ENCODE measurements at regions of chr4 and their contacts with region 1.

Region 1: GRCh38 chr4:183522821-183523220 is 18.0 kb downstream of the ING2 start:
- DNase-seq: no peak
- H3K4me3 ChIP-seq: no peak overlapping the region
- H3K27ac ChIP-seq: no peak overlapping the region
- H3K4me1 ChIP-seq: no peaks in the 10 kb centered on the region
- H3K27me3 ChIP-seq: no peaks in the 10 kb centered on the region
- CTCF ChIP-seq: no peak
- POLR2A ChIP-seq: no peak

Region 2: GRCh38 chr4:183492791-183493221 is 30.0 kb before region 1 on chr4:
- CTCF ChIA-PET with region 1: no interaction called
- POLR2A ChIA-PET with region 1: no interaction called
- dilution Hi-C with region 1: no loop called
- intact Hi-C with region 1: no loop called
- DNase-seq: peak; percentile 35
- H3K4me3 ChIP-seq: no peak overlapping the region
- H3K27ac ChIP-seq: no peak overlapping the region
- H3K4me1 ChIP-seq: peaks cover 7% of the 10 kb centered on the region
- H3K27me3 ChIP-seq: no peaks in the 10 kb centered on the region
- CTCF ChIP-seq: no peak
- POLR2A ChIP-seq: no peak

Region 3: DNA sequence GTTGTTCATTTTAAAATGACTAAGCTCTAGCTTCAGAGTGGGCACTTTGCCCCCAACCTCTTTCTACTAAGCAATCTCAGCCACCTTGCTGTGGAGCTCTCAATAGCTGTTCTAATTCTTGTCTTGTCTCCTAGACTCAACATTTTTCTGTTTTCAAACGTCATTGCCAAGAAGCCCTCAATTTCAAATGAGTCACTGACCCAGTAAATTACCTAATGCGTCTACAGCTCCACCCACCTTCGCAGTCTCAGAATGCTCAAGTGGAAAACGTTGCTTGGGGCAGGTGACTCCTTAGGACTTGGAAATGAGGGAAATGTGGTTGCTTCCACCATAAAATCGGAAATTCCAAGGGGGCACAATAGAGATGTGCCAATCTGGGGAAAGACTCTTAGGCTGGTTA is 41.1 kb after region 1 on chr4:
- CTCF ChIA-PET with region 1: no interaction called
- POLR2A ChIA-PET with region 1: no interaction called
- dilution Hi-C with region 1: no loop called
- intact Hi-C with region 1: loop called (anchors 1 kb)
- DNase-seq: no peak
- H3K4me3 ChIP-seq: no peak overlapping the region
- H3K27ac ChIP-seq: no peak overlapping the region
- H3K4me1 ChIP-seq: no peaks in the 10 kb centered on the region
- H3K27me3 ChIP-seq: peaks cover 2 to 4% of the 10 kb centered on the region in 2 experiments
- CTCF ChIP-seq: no peak
- POLR2A ChIP-seq: no peak

Measured in endothelial cell of umbilical vein (primary cell).